Activated T-helper 2 cell treated with anti-CD3 and anti-CD28 coated beads, Interferon-gamma antibody, Interleukin-2, Interleukin-4, amounts not matched to agents 10 μg/mL and 5 μg/mL and 100 μg/mL, durations not matched to agents 14 hours and 24 hours and 36 hours (primary cell): ENCODE measurements at regions of chr7 and their contacts with region 1.

Region 1: GRCh38 chr7:139230774-139231512 is at the start of gene UBN2:
- DNase-seq: peak; percentile 87
- H3K4me3 Mint-ChIP-seq: peak within 1 kb of the TSS; percentile 100
- H3K27ac Mint-ChIP-seq: peak within 1 kb of the TSS; percentile 83
- H3K4me1 Mint-ChIP-seq: peaks cover 21% of the 10 kb centered on the region
- H3K27me3 Mint-ChIP-seq: peaks cover 17% of the 10 kb centered on the region
- total RNA-seq, gene UBN2: 13.6 and 14.1 TPM in 2 replicates

Region 2: GRCh38 chr7:138886501-138886917 is 344.4 kb before region 1 on chr7:
- intact Hi-C with region 1: loop called (anchors 5 kb)
- DNase-seq: peak; percentile 24
- H3K4me3 Mint-ChIP-seq: no peak overlapping the region
- H3K27ac Mint-ChIP-seq: peak overlapping the region; percentile 30
- H3K4me1 Mint-ChIP-seq: peaks cover 20% of the 10 kb centered on the region
- H3K27me3 Mint-ChIP-seq: peaks cover 2% of the 10 kb centered on the region

Region 3: DNA sequence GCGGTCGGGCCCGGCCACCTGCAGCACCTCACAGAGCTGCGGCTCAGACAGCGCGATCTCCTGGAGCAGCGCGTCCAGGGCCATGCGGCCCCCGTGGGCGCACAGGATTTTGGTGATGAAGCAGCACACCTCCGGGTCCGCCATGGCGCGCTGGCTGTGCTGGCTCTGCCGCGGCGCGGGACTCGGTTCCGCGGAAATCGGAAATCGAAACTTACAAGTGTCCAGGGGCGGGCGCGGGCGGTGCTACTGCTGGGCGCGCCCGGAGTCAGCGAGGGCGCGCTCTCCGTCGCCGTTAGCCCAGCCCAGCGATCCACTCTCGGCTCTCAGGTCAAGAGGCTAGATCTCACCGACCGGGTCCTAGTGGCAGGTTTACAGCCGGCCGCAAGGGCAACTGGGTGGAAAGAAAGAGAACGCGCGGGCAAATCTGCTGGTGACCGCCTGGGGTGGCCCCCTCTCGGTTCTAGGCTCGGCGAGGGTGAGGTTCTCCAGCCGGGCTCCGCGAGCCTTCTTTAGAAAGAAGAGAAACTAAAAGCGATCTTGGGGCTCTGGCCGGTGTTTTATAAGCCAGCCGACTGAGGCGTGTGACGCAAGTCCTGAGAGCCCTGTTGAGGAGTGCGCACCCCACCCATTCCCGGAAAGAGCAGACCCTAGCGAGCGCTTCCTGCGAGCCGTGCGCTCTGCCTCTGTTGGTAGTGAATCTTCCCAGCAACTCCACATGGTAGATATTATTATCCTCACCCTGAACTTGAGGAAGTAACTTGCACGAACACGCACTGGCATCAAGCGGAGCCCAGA is 121.6 kb before region 1 on chr7 and contains the start of gene ZC3HAV1:
- intact Hi-C with region 1: loop called (anchors 2 kb)
- DNase-seq: peak; percentile 90
- H3K4me3 Mint-ChIP-seq: peak within 1 kb of the TSS; percentile 100
- H3K27ac Mint-ChIP-seq: peak within 1 kb of the TSS; percentile 98
- H3K4me1 Mint-ChIP-seq: peaks cover 30% of the 10 kb centered on the region
- H3K27me3 Mint-ChIP-seq: no peaks in the 10 kb centered on the region
- total RNA-seq, gene ZC3HAV1: 76.0 and 77.1 TPM in 2 replicates

Region 4: DNA sequence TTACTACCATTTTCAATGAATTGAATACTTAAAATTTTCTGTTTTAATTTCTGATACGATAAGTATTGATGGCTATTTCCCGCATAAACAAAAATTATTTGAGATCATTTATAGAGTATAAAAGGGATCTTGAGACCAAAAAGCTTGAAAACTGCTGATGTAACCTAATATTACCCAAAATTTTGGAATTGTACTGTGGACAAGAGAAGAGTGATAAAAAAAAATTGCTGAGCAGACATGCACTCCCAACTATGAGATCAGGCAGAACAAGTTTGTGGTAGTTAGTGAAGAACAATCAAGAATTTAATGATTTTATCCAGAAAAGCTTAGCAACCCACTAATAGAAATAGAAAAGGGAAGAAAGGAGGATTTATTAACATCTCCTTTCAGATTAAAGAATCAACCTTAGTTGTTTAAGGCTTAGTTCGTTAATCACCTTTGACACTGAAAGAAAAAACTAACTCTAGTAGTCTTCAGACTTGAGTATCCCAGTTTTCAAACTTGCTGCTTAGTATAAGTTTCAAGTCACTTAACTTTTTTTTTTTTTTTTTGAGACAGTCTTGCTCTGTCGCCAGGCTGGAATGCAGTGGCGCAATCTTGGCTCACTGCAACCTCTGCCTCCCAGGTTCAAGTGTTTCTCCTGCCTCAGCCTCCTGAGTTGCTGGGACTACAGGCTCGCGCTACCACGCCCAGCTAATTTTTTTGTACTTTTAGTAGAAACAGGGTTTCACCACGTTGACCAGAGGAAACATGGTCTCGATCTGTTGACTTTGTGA is 70.9 kb before region 1 on chr7:
- intact Hi-C with region 1: no loop called
- DNase-seq: no peak
- H3K4me3 Mint-ChIP-seq: no peak overlapping the region
- H3K27ac Mint-ChIP-seq: no peak overlapping the region
- H3K4me1 Mint-ChIP-seq: no peaks in the 10 kb centered on the region
- H3K27me3 Mint-ChIP-seq: no peaks in the 10 kb centered on the region

Region 5: DNA sequence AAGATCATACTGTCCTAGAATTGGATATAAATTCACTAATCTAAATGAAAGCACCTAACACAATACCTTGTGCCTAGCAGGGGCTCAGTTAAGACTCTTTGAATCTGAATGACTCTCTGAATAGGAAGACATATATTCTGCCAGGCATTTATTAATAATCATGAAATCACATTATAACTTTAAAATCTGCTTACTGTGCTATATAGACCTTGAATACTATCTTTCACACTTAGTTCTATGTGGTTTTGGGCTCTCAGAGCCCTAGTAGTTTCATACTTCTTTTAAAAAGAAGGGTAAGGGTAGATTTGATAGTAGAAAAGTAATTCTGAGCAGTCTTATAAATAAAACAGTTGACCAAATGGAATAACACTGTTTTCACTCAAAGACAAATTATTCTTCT is 10.3 kb after region 1 on chr7:
- intact Hi-C with region 1: loop called (anchors 1 kb)
- DNase-seq: no peak
- H3K4me3 Mint-ChIP-seq: no peak overlapping the region
- H3K27ac Mint-ChIP-seq: no peak overlapping the region
- H3K4me1 Mint-ChIP-seq: peaks cover 14% of the 10 kb centered on the region
- H3K27me3 Mint-ChIP-seq: no peaks in the 10 kb centered on the region

Region 6: GRCh38 chr7:139359366-139360209 is 128.6 kb after region 1 on chr7 and contains the start of gene LUC7L2:
- intact Hi-C with region 1: loop called (anchors 1 kb)
- DNase-seq: peak; percentile 99
- H3K4me3 Mint-ChIP-seq: peak within 1 kb of the TSS; percentile 94
- H3K27ac Mint-ChIP-seq: peak within 1 kb of the TSS; percentile 99
- H3K4me1 Mint-ChIP-seq: peaks cover 32% of the 10 kb centered on the region
- H3K27me3 Mint-ChIP-seq: no peaks in the 10 kb centered on the region
- total RNA-seq, gene LUC7L2: 150 and 151 TPM in 2 replicates